ENCODE measurements at regions of chr4 and their contacts with region 1.

Region 1: DNA sequence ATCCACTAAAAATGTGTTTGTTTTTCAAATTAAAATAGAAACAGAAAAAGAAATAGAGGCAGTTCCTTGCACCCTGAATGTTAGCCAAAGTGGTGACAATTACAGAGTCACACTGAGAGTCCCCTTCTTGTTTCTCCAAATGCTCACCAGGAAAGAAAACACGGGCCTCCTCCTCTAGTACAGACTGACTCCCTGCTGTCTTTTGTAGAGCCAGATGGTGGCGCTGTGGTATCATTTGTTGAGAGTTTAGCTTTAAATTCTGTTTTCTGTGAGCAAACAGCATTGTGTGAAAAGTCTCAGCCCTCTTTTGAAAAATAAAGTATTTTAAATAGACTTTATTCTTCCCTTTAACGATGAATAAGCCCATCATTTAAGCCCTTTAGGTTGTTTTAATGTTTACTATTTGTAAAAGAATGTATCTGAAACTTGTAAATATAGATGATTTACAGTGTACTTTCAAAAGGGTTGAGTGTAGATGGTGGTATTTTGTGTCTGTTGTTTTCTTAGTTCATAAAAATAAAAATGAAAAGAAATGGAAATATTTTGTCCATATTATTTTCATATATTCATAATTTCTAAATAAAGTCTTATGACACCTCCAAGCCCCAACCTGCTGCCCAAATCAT is 36.9 kb upstream of the ATOH1 start:
- DNase-seq: peak in 5 of 6 donors; percentile 28 to 64 (median 48)
- ATAC-seq: peak; percentile 61 to 92 (median 88)
- H3K4me3 ChIP-seq: no peak overlapping the region
- H3K27ac ChIP-seq: no peak overlapping the region
- H3K4me1 ChIP-seq: no peaks in the 10 kb centered on the region
- H3K27me3 ChIP-seq: no peaks in the 10 kb centered on the region
- CTCF ChIP-seq: peak; percentile 29 to 83 (median 72)

Region 2: GRCh38 chr4:94127707-94128328 is 336.1 kb after region 1 on chr4:
- intact Hi-C with region 1: loop called in 2 of 3 experiments (anchors 10 kb)
- DNase-seq: no peak
- ATAC-seq: peak; percentile 48 to 79 (median 78)
- H3K4me3 ChIP-seq: no peak overlapping the region
- H3K27ac ChIP-seq: no peak overlapping the region
- H3K4me1 ChIP-seq: no peaks in the 10 kb centered on the region
- H3K27me3 ChIP-seq: no peaks in the 10 kb centered on the region
- CTCF ChIP-seq: peak in 3 of 4 donors; percentile 51 to 63 (median 55)